Right ventricle myocardium superior (tissue), 1 donor: ENCODE measurements at regions of chr6 and their contacts with region 1.

Region 1: DNA sequence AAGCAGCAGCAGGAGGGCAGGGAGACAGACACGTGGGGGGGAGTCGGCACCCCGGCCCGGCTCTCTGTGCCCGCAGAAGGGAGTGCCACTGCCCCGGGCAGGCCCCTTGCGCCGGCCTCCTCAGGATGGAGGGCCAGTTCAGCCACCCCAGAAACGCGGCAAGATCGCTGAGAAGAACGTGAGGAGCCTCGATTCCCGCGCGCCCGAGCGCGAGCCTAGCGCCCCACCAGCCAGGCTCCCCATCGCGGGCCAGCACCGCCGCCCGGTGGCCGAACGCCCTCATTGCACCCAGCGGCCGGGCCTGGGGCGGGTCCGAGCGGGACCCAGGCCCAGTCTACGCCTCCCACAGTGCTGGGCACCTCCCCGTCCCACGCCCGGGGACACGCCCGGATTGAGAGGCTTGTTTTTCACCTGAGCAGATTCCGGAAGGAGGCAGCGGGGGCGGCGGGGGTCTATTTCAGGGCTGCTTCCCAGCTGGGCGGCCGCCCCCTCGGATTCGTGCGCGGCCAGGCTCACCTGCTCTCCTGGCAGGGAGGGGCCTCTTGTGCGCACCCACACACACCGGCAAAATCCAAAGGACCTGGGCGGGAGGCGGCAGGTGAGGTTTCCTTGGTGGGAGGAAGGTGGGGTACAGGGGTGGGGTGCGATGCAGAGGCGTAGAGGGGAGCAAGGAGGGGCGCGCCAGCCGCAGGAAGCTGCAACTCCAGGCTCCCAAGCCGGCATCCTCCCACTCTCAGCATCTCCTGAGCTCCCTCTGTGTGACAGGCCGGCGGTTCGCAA is 9.0 kb upstream of the GRM4 start:
- DNase-seq: peak; percentile 69
- ATAC-seq: peak; percentile 90

Region 2: GRCh38 chr6:34015586-34015985 is 139.3 kb before region 1 on chr6:
- intact Hi-C with region 1: no loop called
- DNase-seq: no peak
- ATAC-seq: no peak

Region 3: DNA sequence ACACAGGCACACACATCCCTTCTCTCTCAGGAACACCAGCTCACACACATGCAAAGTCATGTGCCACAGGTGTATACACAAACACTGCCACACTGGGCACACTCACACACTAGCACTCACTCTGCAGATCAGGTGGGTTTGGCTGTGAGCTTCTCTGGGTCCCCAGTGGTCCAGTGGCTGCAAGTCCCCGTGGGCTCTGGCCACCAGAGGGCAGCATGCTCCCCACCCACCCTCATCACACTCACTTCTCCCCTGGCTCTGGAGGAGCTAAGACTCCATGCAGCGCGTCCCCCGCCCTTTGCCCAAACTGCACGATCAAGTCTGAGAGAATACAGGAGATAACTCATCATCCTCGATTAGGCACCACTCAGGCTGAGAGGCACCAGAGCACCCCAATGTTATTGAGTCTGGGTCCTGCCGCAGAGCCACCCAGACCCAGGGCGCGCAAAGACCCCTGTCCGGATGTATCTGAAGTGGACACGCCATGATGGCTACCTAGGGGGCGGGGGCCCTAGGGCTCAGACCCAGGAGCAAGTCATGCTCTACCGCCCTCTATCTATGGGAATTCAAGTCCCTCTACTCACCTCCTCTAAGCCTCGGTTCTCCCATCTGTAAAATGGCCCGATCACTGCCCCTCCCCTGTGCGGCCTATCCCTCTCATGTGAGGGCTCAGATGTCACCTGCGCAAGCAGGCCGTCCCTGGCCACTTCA is 99.5 kb before region 1 on chr6:
- intact Hi-C with region 1: loop called (anchors 5 kb)
- DNase-seq: peak; percentile 70
- ATAC-seq: peak; percentile 72

Region 4: DNA sequence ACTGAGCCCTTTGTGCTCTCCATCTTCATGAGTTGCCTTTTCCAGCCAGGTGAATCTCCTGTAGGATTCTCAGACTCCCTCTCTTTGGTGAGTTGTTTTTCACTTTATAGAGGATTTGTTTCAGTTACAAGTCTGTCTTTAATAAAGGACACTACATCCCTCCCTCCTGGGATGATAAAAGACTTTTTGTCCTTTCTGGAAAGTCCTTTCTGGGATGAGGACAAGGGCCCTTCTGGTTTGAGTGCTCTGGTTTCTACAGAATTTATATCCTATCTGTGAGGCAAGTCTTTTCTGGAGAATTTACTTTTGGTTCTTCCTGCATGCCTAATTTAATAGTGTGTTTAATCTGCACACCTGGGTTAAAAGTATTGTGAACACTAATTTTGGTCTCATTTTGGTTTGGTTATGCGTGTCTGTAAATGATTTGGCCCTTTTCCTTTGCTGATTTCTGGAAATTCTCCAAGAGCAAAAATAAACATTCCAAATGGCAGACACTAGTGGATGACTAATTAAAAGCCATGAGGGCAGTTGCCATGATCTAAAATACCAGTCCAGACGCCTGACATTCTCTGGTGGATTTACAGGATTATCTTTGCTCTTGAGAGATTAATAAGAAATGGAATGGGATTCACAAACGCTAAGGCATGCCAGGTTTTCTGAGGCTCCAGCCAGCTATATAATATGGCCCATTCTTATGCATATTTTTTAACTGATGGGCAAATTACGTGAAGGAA is 941.4 kb after region 1 on chr6:
- intact Hi-C with region 1: no loop called
- DNase-seq: no peak
- ATAC-seq: peak; percentile 58